Activated CD4-positive, alpha-beta memory T cell treated with anti-CD3 and anti-CD28 coated beads for 36 hours (primary cell): ENCODE measurements at regions of chr16 and their contacts with region 1.

Region 1: DNA sequence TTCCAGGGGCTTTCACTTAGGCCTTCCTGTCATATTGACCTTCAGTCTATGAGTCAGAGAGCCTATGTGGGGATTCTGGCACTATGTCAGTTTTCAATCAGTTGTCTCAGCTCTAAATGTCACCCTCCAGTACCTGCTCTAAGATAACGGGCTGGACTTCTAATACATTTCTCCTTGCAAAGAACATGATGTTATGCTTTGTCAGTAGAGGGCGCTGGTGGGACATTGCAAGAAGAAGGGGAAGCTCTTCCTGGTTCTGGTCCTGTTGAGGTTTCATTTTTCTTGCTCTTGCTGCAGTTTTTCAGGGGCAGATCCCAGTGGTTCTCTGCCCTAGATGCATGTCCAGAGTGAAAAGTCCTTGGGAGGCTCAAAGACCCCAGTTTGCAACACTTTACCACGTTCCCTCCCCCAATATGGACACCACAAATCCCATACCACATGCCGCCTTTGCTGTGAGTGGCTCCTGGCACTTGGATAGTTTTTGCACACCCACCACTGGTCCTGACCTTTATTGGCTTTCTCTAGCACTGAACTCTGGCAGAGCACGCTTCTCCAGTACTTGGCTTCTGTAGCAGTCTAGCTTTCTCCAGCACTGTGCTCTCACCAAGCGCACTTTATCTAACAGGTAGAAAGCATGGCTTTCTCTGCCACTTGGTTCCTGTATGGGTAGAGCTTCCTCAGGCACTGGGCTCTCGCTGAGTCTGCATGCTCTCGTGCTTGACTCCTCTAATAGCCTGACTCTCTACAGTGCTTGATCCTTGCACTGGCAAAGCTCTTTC is 49.0 kb downstream of the BCL7C start:
- DNase-seq: peak; percentile 80
- H3K4me3 Mint-ChIP-seq: no peak overlapping the region
- H3K27ac Mint-ChIP-seq: no peak overlapping the region
- H3K4me1 Mint-ChIP-seq: peaks cover 9% of the 10 kb centered on the region
- H3K27me3 Mint-ChIP-seq: no peaks in the 10 kb centered on the region

Region 2: DNA sequence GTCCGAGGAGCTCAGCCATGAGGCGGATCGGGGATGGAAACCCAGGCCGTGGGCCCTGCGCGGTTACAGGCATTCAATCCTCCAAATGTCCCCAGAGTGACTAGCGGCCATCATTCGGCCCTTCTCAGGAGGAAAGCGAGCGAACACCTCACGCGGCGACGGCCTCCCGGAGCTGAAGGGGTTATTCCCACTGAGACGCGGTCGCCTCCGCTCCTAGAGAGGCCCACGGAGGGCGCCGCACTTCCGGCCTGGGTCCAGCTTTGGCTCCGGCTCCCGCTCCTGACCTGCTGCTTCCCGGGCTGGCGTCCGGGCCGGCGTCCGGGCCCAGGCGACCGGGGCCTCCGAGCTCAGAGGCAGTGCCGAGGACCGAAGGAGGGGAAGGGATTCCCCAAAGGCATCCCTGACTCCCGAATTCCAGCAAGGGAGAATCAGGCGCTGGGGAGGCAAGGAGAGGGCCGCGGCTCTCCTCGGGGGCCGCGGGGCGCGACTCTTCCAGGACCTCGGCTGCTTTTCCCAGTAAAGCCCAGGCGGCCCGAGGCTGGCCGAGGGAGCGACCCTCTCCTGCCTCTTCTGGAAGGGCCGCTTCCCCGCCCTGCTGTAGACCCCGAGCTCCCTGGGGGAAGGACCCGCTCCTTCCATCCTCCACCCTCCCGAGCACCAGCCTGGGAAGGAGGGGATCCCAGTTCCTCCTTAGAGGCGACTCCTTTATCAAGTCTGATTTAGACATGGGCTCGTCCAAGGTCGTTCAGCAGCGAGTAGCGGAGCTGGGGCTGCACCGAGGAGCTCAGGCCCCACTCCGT is 39.3 kb before region 1 on chr16:
- CTCF ChIA-PET with region 1: interaction called, 10 read pairs
- POLR2A ChIA-PET with region 1: no interaction called
- intact Hi-C with region 1: no loop called
- DNase-seq: peak; percentile 66
- H3K4me3 Mint-ChIP-seq: peak overlapping the region; percentile 63
- H3K27ac Mint-ChIP-seq: peak overlapping the region; percentile 45
- H3K4me1 Mint-ChIP-seq: peaks cover 14% of the 10 kb centered on the region
- H3K27me3 Mint-ChIP-seq: peaks cover 1% of the 10 kb centered on the region

Region 3: GRCh38 chr16:30867747-30868146 is 22.9 kb after region 1 on chr16:
- CTCF ChIA-PET with region 1: interaction called, 28 read pairs
- POLR2A ChIA-PET with region 1: no interaction called
- intact Hi-C with region 1: no loop called
- DNase-seq: no peak
- H3K4me3 Mint-ChIP-seq: no peak overlapping the region
- H3K27ac Mint-ChIP-seq: no peak overlapping the region
- H3K4me1 Mint-ChIP-seq: peaks cover 7% of the 10 kb centered on the region
- H3K27me3 Mint-ChIP-seq: no peaks in the 10 kb centered on the region

Region 4: GRCh38 chr16:30893744-30894539 is 49.1 kb after region 1 on chr16 and contains the start of gene BCL7C:
- CTCF ChIA-PET with region 1: interaction called, 21 read pairs
- POLR2A ChIA-PET with region 1: interaction called, 3 read pairs
- intact Hi-C with region 1: loop called (anchors 2 kb)
- DNase-seq: peak; percentile 92
- H3K4me3 Mint-ChIP-seq: peak within 1 kb of the TSS; percentile 85
- H3K27ac Mint-ChIP-seq: peak within 1 kb of the TSS; percentile 74
- H3K4me1 Mint-ChIP-seq: peaks cover 38% of the 10 kb centered on the region
- H3K27me3 Mint-ChIP-seq: no peaks in the 10 kb centered on the region
- total RNA-seq, gene BCL7C: 25.6 to 25.7 TPM

Region 5: GRCh38 chr16:30914830-30915229 is 70.0 kb after region 1 on chr16:
- CTCF ChIA-PET with region 1: interaction called, 26 read pairs
- POLR2A ChIA-PET with region 1: no interaction called
- intact Hi-C with region 1: no loop called
- DNase-seq: no peak
- H3K4me3 Mint-ChIP-seq: no peak overlapping the region
- H3K27ac Mint-ChIP-seq: no peak overlapping the region
- H3K4me1 Mint-ChIP-seq: no peaks in the 10 kb centered on the region
- H3K27me3 Mint-ChIP-seq: no peaks in the 10 kb centered on the region

Region 6: DNA sequence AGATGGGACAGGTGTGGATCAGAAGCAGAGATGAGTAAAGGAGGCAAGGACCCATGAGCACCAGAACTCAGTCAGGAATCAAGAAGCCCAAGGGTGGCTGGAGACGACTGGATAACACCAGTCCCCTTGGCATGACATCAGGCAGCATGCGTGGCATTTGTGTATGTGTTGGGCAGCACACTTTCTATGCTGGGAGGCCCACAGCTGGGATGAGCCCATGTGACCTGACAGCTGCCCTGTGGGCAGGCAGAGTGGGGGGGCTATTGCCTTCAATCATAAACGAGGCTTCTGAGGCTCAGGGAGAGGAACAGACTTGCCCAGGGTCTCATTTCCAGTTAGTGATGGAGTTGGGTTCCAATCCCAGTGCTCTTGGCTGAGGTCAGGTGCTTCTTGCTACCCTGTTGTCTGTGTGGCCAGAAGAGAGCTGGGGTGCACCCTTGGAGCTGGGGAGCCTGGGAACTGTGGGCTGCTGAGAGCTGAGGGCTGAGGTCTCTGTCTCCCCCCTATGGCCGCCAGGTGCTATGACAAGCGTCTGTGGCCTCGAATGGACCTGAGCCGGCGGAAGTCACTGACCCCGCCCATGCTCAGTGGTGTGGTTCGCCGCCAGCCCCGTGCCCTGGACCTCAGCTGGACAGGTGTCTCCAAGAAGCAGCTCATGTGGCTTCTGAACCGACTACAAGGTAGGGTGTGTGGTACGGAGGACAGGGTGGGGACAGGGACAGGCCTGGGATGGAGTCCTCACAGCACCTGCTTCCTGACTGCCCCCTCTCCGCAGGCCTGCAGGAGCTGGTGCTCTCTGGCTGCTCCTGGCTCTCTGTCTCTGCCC is 97.0 kb after region 1 on chr16:
- CTCF ChIA-PET with region 1: interaction called, 71 read pairs
- POLR2A ChIA-PET with region 1: interaction called, 4 read pairs
- intact Hi-C with region 1: no loop called
- DNase-seq: peak; percentile 84
- H3K4me3 Mint-ChIP-seq: peak overlapping the region; percentile 32
- H3K27ac Mint-ChIP-seq: peak overlapping the region; percentile 72
- H3K4me1 Mint-ChIP-seq: peaks cover 18% of the 10 kb centered on the region
- H3K27me3 Mint-ChIP-seq: no peaks in the 10 kb centered on the region